Panc1 (cell line): ENCODE measurements at regions of chr10 and their contacts with region 1.

Region 1: GRCh38 chr10:118046395-118047156 is at the start of gene RAB11FIP2:
- DNase-seq: peak; percentile 13
- ATAC-seq: peak; percentile 96
- H3K4me3 ChIP-seq: peak within 1 kb of the TSS; percentile 84 to 89
- H3K27ac ChIP-seq: peak within 1 kb of the TSS; percentile 94
- H3K4me1 ChIP-seq: peaks cover 24% of the 10 kb centered on the region
- H3K27me3 ChIP-seq: no peaks in the 10 kb centered on the region
- CTCF ChIP-seq: peak; percentile 40
- total RNA-seq, gene RAB11FIP2: 18.1 TPM

Region 2: DNA sequence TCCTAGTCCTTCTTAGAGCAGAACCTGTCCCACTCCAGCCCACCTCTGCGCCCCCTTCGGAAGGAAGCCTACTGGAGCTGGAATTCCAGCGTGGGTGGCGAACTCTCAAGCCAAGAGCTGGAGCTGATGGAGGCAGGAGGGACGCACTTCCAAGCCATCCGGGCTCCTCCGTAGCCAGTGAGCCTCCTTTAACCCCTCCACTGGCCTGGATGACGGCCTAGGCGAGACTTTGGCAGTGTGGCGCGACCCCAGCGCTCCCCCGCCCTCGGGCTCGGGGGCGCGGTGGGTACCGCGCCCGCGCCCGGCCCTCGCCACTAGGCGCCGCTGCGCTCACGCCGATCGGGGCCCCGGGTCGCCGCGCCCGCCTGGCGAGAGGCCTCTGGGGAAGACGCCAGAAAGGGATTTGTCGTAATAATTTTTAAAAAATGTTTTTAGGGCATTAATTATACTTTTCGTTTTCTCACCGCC is 509.1 kb before region 1 on chr10:
- CTCF ChIA-PET with region 1: no interaction called
- POLR2A ChIA-PET with region 1: no interaction called
- in situ Hi-C with region 1: no loop called
- intact Hi-C with region 1: loop called (anchors 10 kb)
- DNase-seq: no peak
- ATAC-seq: peak; percentile 79
- H3K4me3 ChIP-seq: peak overlapping the region in 1 of 2 experiments; percentile 31; a peak in 1 of 4 replicates
- H3K27ac ChIP-seq: no peak overlapping the region
- H3K4me1 ChIP-seq: peaks cover 4% of the 10 kb centered on the region
- H3K27me3 ChIP-seq: peaks cover 46% of the 10 kb centered on the region
- CTCF ChIP-seq: peak; percentile 99

Region 3: DNA sequence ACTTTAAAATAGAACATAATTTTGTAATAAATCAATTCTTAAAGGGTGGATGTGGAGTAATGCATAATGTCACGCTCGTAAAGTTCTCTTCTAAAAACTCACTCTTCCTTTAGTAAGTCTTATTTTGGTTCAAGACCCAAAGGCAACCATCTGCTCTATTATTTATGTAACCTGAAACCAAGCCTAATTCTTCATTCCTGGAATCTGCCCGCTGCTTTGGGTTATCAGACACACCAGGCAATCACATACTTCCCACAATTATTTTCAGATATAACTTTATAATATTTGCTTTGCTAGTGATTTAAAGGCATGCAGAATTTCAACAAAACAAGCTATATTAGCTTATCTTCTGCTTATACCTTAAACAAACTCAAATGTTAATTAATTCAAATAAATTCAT is 38.8 kb before region 1 on chr10:
- CTCF ChIA-PET with region 1: no interaction called
- POLR2A ChIA-PET with region 1: no interaction called
- in situ Hi-C with region 1: no loop called
- intact Hi-C with region 1: no loop called
- DNase-seq: no peak
- ATAC-seq: no peak
- H3K4me3 ChIP-seq: no peak overlapping the region
- H3K27ac ChIP-seq: no peak overlapping the region
- H3K4me1 ChIP-seq: no peaks in the 10 kb centered on the region
- H3K27me3 ChIP-seq: no peaks in the 10 kb centered on the region
- CTCF ChIP-seq: no peak